HAP-1 (cell line): ENCODE measurements at regions of chr19 and their contacts with region 1.

Region 1: GRCh38 chr19:19776041-19777008 is 43.4 kb upstream of the ZNF14 start:
- DNase-seq: peak; percentile 96 to 98
- H3K4me3 ChIP-seq: peak overlapping the region; percentile 54
- H3K4me1 ChIP-seq: peaks cover 6% of the 10 kb centered on the region; the same call in 1 of the 2 replicates
- H3K27me3 ChIP-seq: no peaks in the 10 kb centered on the region

Region 2: DNA sequence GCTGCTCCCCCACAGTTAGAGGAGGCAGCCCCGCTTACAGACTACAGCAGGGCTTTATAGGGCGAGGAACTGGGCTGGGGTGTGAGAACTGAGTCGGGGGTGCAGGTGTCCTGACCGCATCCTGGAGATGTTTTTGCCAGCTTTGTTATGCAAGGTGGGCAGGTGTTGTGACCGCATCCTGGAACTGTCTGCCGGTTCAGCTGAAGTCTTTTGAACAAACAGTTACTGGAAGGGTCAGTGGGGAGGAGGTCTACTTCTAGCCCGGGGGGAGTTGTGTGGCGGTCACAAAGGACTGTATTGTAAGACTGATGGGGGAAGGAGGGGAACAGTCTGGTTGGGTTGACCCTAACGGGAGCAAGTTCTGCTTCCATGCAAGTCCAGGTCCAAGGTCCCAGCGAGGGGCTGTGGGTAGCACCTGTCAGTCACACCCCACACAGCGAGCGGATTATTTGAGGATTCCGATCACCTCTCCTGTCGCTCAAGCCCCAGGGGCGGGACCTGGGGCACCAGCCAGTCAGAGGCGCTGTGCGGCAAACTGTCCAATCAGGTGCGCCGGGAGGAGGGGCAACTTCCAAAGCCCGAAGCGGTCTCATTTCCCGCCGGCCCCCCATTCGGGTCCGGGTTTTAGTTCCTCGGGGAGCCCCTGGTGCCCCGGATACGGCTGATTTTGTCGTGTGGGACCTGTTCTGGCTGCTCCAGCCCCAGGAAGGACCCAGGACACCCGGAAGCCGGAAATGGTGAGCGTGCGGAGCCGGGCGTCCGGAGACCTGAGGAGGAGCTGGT is 107.9 kb before region 1 on chr19 and contains the start of gene ZNF101:
- in situ Hi-C with region 1: loop called (anchors 5 kb)
- DNase-seq: peak; percentile 90 to 98
- H3K4me3 ChIP-seq: peak within 1 kb of the TSS; percentile 96
- H3K4me1 ChIP-seq: peaks cover 4% of the 10 kb centered on the region
- H3K27me3 ChIP-seq: no peaks in the 10 kb centered on the region

Region 3: GRCh38 chr19:19732579-19733501 is 43.5 kb before region 1 on chr19 and contains the start of gene ZNF14:
- in situ Hi-C with region 1: loop called (anchors 5 kb)
- DNase-seq: peak; percentile 93 to 96
- H3K4me3 ChIP-seq: peak within 1 kb of the TSS; percentile 80
- H3K4me1 ChIP-seq: 0 out of 2 replicates have a peak, but pooled peaks cover 2% of the 10 kb centered on the region
- H3K27me3 ChIP-seq: no peaks in the 10 kb centered on the region

Region 4: DNA sequence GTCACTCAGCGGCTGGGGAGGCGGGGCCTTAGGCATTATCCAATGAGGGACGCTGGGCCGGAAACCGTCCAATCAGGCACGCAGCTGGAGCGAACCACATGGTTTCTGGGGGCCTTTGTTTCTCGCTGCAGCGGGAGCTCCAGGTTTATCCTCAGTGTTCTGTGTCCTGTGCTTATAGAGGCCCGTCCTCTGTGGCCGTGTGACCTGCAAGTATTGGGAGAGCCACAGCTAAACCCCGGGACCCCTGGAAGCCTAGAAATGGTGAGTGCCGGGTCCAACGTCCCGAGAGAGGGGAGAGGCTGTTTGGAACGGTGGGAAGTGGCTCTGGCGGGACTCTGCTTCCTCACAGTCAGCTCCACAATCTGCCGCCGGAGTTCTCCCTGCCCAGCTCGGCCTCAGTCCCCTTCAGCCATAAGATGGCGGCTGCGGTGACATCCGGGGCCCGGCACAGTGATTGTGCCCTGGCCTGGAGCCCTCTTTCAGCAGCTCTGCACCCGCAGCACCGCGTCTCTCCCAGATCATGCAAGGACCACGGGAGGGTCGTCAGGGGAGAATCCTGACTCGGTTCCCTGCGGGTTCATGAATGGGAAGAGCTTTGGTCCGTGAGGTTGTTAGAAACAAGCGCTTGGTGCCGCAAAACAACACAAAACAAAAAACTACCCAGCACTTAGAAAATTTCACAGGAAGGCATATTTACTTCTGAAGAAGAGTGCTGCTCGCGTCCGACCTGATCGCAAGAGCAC is 89.6 kb after region 1 on chr19 and contains the start of gene ZNF253:
- in situ Hi-C with region 1: no loop called
- DNase-seq: no peak
- H3K4me3 ChIP-seq: no peak within 1 kb of the TSS
- H3K4me1 ChIP-seq: no peaks in the 10 kb centered on the region
- H3K27me3 ChIP-seq: no peaks in the 10 kb centered on the region